ENCODE measurements at regions of chrX and their contacts with region 1.

Region 1: DNA sequence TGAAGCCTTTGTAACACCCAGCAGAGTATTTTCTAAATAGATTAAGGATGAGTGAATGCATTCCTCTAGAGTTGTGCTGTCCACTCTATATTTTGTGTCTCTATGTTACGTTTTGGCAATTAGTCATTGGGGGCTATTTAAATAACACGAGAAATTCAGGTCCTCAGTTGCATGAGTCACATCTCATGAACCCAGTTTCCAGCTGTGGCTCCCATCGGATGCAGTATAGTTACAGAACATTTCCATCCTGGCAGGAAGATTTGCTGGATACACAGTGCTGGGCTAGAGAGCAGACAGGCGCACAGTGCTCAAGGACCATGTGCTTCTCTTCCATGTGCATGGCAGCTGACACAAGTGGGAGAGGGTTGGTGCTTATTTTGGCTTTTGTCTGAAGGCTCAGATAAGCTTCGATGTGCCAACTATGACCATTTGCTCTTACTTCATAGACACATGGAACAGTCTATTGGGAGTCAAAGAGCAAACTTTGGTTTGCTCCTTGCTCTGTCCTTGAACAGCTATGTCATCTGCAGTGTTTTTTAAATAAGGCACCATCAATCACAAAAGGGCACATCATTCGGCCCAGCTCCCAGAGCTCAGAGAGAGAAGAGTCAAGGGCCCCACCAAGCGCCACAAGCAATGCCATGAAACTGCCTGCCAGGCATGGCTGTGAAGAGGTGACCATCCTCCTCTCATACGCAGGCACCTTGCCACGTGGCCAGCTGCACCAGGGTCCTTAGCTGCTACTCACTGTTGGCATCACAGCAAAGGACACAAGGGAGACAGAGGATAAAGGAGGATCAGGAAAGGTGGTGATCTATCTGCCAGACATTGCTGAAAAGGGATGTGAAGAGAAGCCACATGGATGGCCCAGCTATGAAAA is 8.1 kb upstream of the STS start:
- DNase-seq: no peak
- ATAC-seq: peak in 1 of 2 donors; percentile 18
- H3K4me3 ChIP-seq: no peak overlapping the region
- H3K27ac ChIP-seq: no peak overlapping the region
- H3K4me1 ChIP-seq: peaks cover 0 to 6% of the 10 kb centered on the region in 2 donors
- H3K27me3 ChIP-seq: no peaks in the 10 kb centered on the region
- CTCF ChIP-seq: no peak
- POLR2A ChIP-seq: no peak

Region 2: DNA sequence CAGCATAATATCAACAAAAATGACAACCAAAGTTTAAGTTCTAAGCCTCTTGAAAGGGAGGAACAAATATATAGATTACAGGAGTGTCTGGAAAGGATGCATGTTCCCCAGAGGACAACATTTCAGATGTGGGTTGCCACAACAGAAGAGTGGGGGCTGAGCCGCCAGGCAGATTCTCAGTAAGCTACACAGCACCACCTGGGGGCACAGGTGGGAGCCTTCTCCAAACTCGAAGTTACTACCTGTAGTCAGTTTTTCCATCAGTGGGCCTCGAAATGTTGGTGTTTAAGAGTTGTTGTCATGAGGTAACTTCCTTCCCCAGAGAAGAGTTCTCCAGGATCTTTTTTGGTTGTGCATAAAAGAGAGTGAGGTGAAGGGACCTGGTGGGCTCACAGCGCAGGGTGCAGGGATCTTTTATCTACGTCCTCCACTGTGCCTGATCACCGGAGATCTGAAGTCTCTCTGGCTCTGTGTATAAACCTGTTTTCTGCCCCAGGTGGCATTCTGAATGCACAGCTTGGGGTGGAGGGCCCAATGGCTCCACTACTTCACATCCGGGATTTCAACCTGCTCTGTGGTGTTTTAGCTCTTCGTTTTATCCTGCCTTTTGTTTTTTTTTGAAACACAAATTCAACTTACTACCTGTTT is 50.4 kb before region 1 on chrX:
- in situ Hi-C with region 1: no loop called
- intact Hi-C with region 1: loop called (anchors 2 kb)
- DNase-seq: no peak
- ATAC-seq: no peak
- H3K4me3 ChIP-seq: no peak overlapping the region
- H3K27ac ChIP-seq: no peak overlapping the region
- H3K4me1 ChIP-seq: no peaks in the 10 kb centered on the region
- H3K27me3 ChIP-seq: no peaks in the 10 kb centered on the region
- CTCF ChIP-seq: no peak
- POLR2A ChIP-seq: no peak

Region 3: DNA sequence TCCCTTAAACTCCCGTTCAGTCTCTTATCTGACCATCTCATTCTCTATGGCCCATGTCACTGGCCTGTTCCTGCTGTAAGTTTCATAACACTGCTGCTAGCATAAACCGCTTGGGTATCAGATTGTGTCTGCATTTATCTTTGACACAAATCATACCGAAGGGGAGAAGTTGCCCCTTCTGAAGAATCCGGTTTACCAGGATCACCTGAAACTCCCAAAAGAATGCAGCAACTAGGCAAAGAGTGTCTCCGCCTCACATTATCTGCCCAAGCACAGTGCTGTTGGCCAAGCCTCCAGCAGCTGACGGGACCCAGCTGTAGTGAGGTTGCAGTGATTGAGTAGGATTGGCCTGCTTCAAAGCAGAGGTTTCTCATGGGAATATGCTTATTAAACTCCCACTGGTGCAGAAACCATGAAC is 79.8 kb after region 1 on chrX:
- in situ Hi-C with region 1: no loop called
- intact Hi-C with region 1: no loop called
- DNase-seq: no peak
- ATAC-seq: no peak
- H3K4me3 ChIP-seq: no peak overlapping the region
- H3K27ac ChIP-seq: no peak overlapping the region
- H3K4me1 ChIP-seq: no peaks in the 10 kb centered on the region
- H3K27me3 ChIP-seq: no peaks in the 10 kb centered on the region
- CTCF ChIP-seq: no peak
- POLR2A ChIP-seq: no peak

Region 4: DNA sequence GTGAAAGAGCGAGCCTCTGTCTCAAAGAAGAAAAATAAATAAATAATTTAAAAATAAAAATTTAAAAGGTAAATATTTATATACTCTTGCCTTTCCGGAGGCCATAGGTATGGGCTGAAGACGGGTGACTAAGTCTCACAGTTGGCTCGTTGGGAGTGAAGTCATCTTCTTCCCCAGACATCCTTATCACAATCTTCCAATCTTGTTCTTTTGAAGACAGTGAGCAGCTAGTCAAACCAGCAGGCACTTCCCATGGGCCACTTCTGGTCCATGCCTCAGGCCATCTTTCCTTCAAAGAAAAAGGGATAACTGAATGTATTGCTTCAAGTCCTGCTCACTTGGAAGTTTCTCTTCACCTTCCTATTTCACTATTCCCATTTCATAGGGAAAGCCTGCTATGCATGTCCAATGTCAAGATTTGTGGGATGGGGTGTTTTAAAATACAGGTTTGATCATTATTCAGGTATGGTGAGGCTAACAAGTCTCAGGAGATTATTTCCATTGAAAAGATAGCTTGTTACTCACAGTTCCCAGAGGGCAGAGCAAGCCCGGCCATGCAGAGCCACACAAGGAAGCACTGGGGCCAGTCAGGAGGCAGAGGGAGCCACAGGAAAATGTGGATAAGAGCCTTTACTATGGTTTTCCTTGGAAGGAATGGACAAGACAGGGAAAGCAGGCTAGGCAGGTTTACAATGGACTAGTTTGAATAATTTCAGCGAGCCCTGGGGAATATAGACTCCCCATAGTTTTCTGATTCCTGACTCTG is 1064.9 kb after region 1 on chrX:
- in situ Hi-C with region 1: no loop called
- intact Hi-C with region 1: no loop called
- DNase-seq: no peak
- ATAC-seq: no peak
- H3K4me3 ChIP-seq: no peak overlapping the region
- H3K27ac ChIP-seq: no peak overlapping the region
- H3K4me1 ChIP-seq: no peaks in the 10 kb centered on the region
- H3K27me3 ChIP-seq: no peaks in the 10 kb centered on the region
- CTCF ChIP-seq: no peak
- POLR2A ChIP-seq: no peak